ENCODE measurements at regions of chr2 and their contacts with region 1.

Region 1: DNA sequence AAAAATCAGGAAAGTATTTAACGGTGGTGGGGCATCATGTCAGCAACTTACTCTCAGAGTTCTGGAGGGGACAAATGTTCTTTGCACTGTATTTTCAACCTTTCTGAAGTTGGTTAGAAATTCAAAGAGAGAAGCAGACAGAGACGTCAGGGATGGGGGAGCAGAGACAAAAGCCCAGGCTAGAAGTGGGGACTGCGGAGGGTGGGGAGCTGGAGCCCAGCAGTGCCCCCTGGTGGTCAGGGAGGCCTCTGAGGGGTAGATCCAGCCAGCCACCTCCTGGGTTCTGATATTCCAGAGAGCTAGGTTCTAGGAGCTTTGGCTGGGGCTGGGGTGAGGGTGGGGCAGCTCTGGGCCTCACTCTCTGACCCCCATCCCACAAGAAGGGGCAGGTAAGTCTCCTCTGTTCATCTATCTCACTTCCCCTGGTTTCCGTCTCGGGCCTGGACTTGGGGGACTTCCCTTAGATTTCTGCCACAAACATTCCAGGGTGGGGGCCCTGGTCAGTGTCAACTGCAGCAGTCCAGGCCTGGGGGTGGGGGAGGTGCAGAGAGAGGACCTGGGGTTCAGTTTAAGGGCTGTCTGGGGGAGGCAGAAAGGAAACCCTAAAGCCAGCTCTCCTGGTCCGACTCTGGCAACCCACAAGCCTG is 8.9 kb downstream of the TNS1 start:
- DNase-seq: peak; percentile 25 to 93
- H3K4me3 ChIP-seq: no peak overlapping the region
- H3K27ac ChIP-seq: no peak overlapping the region
- H3K4me1 ChIP-seq: peaks cover 0 to 13% (median 6%) of the 10 kb centered on the region in 4 experiments; a peak in 4 of 7 replicates
- H3K27me3 ChIP-seq: no peaks in the 10 kb centered on the region; a peak in 3 of 7 replicates
- CTCF ChIP-seq: peak in 2 of 3 experiments; percentile 84 to 91; a peak in 3 of 4 replicates
- EP300 ChIP-seq: no peak
- POLR2A ChIP-seq: no peak
- RAD21 ChIP-seq: peak; percentile 57 to 74

Region 2: GRCh38 chr2:217810260-217810659 is 183.7 kb before region 1 on chr2:
- CTCF ChIA-PET with region 1: interaction called, 11 read pairs
- POLR2A ChIA-PET with region 1: no interaction called
- DNase-seq: no peak
- H3K4me3 ChIP-seq: no peak overlapping the region
- H3K27ac ChIP-seq: no peak overlapping the region
- H3K4me1 ChIP-seq: no peaks in the 10 kb centered on the region
- H3K27me3 ChIP-seq: no peaks in the 10 kb centered on the region
- CTCF ChIP-seq: no peak
- EP300 ChIP-seq: no peak
- POLR2A ChIP-seq: no peak
- RAD21 ChIP-seq: no peak

Region 3: DNA sequence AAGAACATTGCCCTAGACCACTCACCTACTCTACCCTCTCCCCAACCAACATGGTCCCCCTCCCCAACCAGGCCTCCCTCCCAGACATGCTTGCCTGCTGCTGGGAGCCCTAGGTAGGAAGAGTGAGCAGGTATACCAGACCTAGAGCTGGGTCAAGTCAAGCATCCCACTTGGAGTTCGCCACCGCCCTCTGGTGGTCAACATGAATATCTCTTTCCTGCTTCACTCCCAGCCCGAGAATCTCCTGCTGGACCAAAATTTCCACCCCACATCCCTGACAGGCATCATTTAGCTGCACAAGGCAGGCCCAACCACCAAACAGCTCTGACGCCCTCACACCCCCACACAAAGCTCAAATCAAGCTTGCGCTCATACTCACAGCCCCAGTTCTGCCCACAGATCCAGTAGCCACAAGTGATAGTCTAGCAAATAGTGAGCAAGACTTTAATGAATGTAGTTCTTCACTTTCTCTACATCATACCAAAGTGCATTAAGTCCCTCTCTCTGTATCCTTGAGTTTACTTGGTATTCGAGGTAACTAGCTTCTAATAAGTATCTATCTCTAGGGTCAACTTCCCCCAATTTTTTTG is 107.1 kb before region 1 on chr2:
- CTCF ChIA-PET with region 1: interaction called, 59 read pairs
- POLR2A ChIA-PET with region 1: no interaction called
- DNase-seq: peak; percentile 47 to 92
- H3K4me3 ChIP-seq: no peak overlapping the region
- H3K27ac ChIP-seq: no peak overlapping the region
- H3K4me1 ChIP-seq: no peaks in the 10 kb centered on the region
- H3K27me3 ChIP-seq: no peaks in the 10 kb centered on the region
- CTCF ChIP-seq: peak; percentile 88 to 95 (median 94)
- EP300 ChIP-seq: no peak
- POLR2A ChIP-seq: no peak
- RAD21 ChIP-seq: peak; percentile 90

Region 4: DNA sequence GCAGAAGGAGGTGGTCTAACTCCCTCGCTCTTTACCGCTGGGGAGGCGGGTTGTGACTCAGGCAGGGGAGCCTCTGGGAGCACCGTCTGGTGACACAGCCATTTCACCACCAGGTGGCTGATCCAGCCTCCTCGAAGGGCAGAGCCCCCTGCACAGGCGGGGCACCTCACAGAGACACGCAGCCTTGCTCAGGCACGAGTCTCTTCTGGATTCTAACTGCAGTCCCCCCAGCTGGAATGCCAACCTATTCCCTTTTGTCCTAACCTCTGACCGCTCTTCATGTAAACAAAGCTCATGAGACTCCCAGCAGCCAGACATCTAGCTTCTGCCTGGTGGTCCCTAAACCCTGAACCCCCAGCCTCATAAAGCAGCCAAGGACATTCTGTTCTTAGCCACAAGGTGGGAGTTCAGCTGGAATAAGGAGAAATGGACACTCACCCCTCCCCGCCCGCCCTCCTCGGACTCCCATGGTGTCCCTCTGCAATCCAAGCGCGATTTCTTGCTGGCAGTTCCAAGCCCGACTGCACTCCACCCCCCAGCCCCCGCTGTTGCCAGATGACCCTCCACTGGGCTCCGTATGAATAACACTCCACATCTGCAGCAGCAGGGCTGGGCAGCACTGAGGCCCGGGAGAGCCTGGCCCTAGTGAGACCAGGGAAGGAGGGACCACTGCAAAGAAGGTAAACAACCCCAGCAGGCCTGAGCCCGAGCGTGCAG is 75.5 kb before region 1 on chr2:
- CTCF ChIA-PET with region 1: interaction called, 23 read pairs
- POLR2A ChIA-PET with region 1: no interaction called
- DNase-seq: no peak
- H3K4me3 ChIP-seq: no peak overlapping the region
- H3K27ac ChIP-seq: no peak overlapping the region
- H3K4me1 ChIP-seq: peaks cover 9 to 48% (median 33%) of the 10 kb centered on the region in 4 experiments
- H3K27me3 ChIP-seq: peaks cover 0 to 4% (median 0%) of the 10 kb centered on the region in 4 experiments; a peak in 3 of 7 replicates
- CTCF ChIP-seq: peak; percentile 53 to 63 (median 55)
- EP300 ChIP-seq: no peak
- POLR2A ChIP-seq: no peak
- RAD21 ChIP-seq: peak in 1 of 2 experiments; percentile 45; a peak in 3 of 4 replicates

Region 5: GRCh38 chr2:217978536-217979165 is 15.3 kb before region 1 on chr2:
- CTCF ChIA-PET with region 1: interaction called, 20 read pairs
- POLR2A ChIA-PET with region 1: no interaction called
- DNase-seq: peak in 1 of 2 experiments; percentile 87
- H3K4me3 ChIP-seq: peak overlapping the region; percentile 37 to 78 (median 59)
- H3K27ac ChIP-seq: no peak overlapping the region
- H3K4me1 ChIP-seq: peaks cover 3 to 12% (median 7%) of the 10 kb centered on the region in 4 experiments
- H3K27me3 ChIP-seq: peaks cover 0 to 26% (median 20%) of the 10 kb centered on the region in 4 experiments; a peak in 6 of 7 replicates
- CTCF ChIP-seq: no peak
- EP300 ChIP-seq: no peak
- POLR2A ChIP-seq: peak in 1 of 2 experiments; percentile 25; a peak in 1 of 3 replicates
- RAD21 ChIP-seq: no peak

Region 6: GRCh38 chr2:218026676-218027425 is 32.9 kb after region 1 on chr2:
- CTCF ChIA-PET with region 1: interaction called, 29 read pairs
- POLR2A ChIA-PET with region 1: interaction called, 3 read pairs
- DNase-seq: peak in 1 of 2 experiments; percentile 44
- H3K4me3 ChIP-seq: no peak overlapping the region
- H3K27ac ChIP-seq: no peak overlapping the region
- H3K4me1 ChIP-seq: peaks cover 0 to 12% (median 3%) of the 10 kb centered on the region in 4 experiments; a peak in 6 of 7 replicates
- H3K27me3 ChIP-seq: no peaks in the 10 kb centered on the region; a peak in 1 of 7 replicates
- CTCF ChIP-seq: no peak
- EP300 ChIP-seq: no peak
- POLR2A ChIP-seq: no peak
- RAD21 ChIP-seq: no peak

Region 7: DNA sequence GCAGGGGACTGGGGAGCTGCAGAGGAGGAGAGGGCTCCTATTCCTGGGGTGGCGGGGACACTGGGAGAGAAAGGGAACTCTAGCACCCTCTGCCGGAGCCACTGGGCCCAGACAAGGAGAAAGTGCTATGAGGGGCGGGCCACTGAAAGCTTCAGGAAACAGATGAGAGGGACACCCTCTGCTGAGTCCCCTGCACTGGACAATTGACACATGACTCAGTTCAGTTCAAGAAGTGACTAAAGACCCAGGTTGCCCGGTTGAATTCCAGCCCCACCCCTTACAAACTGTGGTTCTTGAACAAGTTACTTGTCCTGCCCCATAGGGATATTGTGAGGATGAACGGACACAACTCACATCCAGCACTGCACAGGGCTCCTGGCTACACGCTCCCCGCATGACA is 80.1 kb after region 1 on chr2:
- CTCF ChIA-PET with region 1: interaction called, 19 read pairs
- POLR2A ChIA-PET with region 1: no interaction called
- DNase-seq: peak; percentile 27 to 86
- H3K4me3 ChIP-seq: no peak overlapping the region
- H3K27ac ChIP-seq: no peak overlapping the region
- H3K4me1 ChIP-seq: peaks cover 0 to 7% (median under 1%) of the 10 kb centered on the region in 4 experiments; a peak in 3 of 7 replicates
- H3K27me3 ChIP-seq: no peaks in the 10 kb centered on the region; a peak in 1 of 7 replicates
- CTCF ChIP-seq: peak; percentile 67 to 79 (median 73)
- EP300 ChIP-seq: no peak
- POLR2A ChIP-seq: no peak
- RAD21 ChIP-seq: peak; percentile 46 to 62

Region 8: DNA sequence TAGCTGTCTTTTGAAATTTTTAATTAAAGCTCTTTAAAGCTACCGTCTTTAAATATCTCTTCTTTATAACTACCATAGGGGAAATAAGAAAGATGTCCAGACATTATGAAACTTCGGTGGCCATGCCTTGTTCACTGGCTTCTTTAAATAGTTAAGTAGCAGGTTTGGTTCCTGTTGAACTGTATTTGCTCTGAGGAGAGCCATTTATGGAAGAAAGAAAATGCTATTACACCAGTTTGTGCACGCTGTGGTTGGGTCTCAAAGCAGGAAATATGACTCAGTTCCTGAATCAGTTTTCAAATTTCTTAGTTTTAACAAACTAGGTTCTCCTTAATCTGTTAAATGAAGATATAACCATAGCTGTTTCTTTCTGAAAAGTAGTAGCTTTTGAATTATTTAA is 235.3 kb after region 1 on chr2:
- CTCF ChIA-PET with region 1: no interaction called
- POLR2A ChIA-PET with region 1: no interaction called
- DNase-seq: no peak
- H3K4me3 ChIP-seq: no peak overlapping the region
- H3K27ac ChIP-seq: no peak overlapping the region
- H3K4me1 ChIP-seq: no peaks in the 10 kb centered on the region
- H3K27me3 ChIP-seq: no peaks in the 10 kb centered on the region
- CTCF ChIP-seq: no peak
- EP300 ChIP-seq: no peak
- POLR2A ChIP-seq: no peak
- RAD21 ChIP-seq: no peak